ENCODE measurements at regions of chr1 and their contacts with region 1.

Region 1: GRCh38 chr1:198907423-198907746 is 268.5 kb downstream of the PTPRC start:
- DNase-seq: peak in 1 of 5 donors; percentile 3
- H3K4me3 ChIP-seq: no peak overlapping the region
- H3K4me3 Mint-ChIP-seq: peak overlapping the region in 4 of 8 donors; percentile 35 to 76 (median 54)
- H3K27ac ChIP-seq: no peak overlapping the region
- H3K27ac Mint-ChIP-seq: peak overlapping the region in 1 of 7 donors; percentile 24
- H3K4me1 ChIP-seq: peaks cover 12% of the 10 kb centered on the region
- H3K4me1 Mint-ChIP-seq: peaks cover 0 to 13% (median 7%) of the 10 kb centered on the region in 4 donors
- H3K27me3 ChIP-seq: no peaks in the 10 kb centered on the region
- H3K27me3 Mint-ChIP-seq: no peaks in the 10 kb centered on the region

Region 2: GRCh38 chr1:199102239-199102638 is 194.9 kb after region 1 on chr1:
- CTCF ChIA-PET with region 1: no interaction called
- POLR2A ChIA-PET with region 1: no interaction called
- intact Hi-C with region 1: loop called (anchors 5 kb)
- DNase-seq: no peak
- H3K4me3 ChIP-seq: no peak overlapping the region
- H3K4me3 Mint-ChIP-seq: no peak overlapping the region
- H3K27ac ChIP-seq: no peak overlapping the region
- H3K27ac Mint-ChIP-seq: peak overlapping the region in 1 of 7 donors; percentile 1
- H3K4me1 ChIP-seq: no peaks in the 10 kb centered on the region
- H3K4me1 Mint-ChIP-seq: no peaks in the 10 kb centered on the region
- H3K27me3 ChIP-seq: no peaks in the 10 kb centered on the region
- H3K27me3 Mint-ChIP-seq: no peaks in the 10 kb centered on the region

Region 3: GRCh38 chr1:200107004-200107470 is 1199.7 kb after region 1 on chr1:
- CTCF ChIA-PET with region 1: no interaction called
- POLR2A ChIA-PET with region 1: no interaction called
- intact Hi-C with region 1: no loop called
- DNase-seq: no peak
- H3K4me3 ChIP-seq: no peak overlapping the region
- H3K4me3 Mint-ChIP-seq: no peak overlapping the region
- H3K27ac ChIP-seq: no peak overlapping the region
- H3K27ac Mint-ChIP-seq: no peak overlapping the region
- H3K4me1 ChIP-seq: no peaks in the 10 kb centered on the region
- H3K4me1 Mint-ChIP-seq: peaks cover 0 to 1% (median 0%) of the 10 kb centered on the region in 4 donors
- H3K27me3 ChIP-seq: no peaks in the 10 kb centered on the region
- H3K27me3 Mint-ChIP-seq: peaks cover 5 to 16% of the 10 kb centered on the region in 2 donors

Measured in CD4-positive, alpha-beta memory T cell (primary cell).